ENCODE measurements at regions of chr12 and their contacts with region 1.

Region 1: GRCh38 chr12:7933255-7933729 is 2.7 kb downstream of the SLC2A3 start:
- DNase-seq: peak; percentile 33 to 87 (median 83)
- ATAC-seq: peak; percentile 85
- H3K4me3 ChIP-seq: peak overlapping the region; percentile 98
- H3K4me3 Mint-ChIP-seq: no peak overlapping the region
- H3K27ac ChIP-seq: peak overlapping the region; percentile 84
- H3K27ac Mint-ChIP-seq: no peak overlapping the region
- H3K4me1 ChIP-seq: peaks cover 18 to 33% of the 10 kb centered on the region in 2 donors
- H3K4me1 Mint-ChIP-seq: peaks cover 25 to 37% (median 34%) of the 10 kb centered on the region in 7 donors
- H3K27me3 ChIP-seq: no peaks in the 10 kb centered on the region
- H3K27me3 Mint-ChIP-seq: no peaks in the 10 kb centered on the region

Region 2: DNA sequence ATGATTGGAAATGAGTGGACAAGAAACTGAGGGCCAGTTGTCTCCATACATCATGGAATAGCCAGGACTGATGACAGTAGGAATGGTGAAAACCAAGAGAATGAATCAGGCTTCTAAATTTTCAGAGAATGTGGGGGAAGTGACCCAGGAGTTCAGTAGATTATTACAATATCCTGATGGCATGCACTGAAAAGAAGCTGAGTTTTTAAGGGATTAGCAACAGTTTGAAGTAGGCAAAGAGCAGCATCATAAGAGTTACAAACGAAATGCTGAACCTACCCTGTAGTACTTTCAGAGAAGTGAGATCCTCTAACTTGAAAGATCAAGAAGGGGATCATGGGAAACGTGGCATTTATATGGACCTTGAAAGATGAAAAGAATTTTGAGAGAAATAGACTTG is 73.7 kb before region 1 on chr12:
- CTCF ChIA-PET with region 1: interaction called, 14 read pairs
- POLR2A ChIA-PET with region 1: interaction called, 4 read pairs
- intact Hi-C with region 1: loop called (anchors 1 to 2 kb)
- DNase-seq: no peak
- ATAC-seq: no peak
- H3K4me3 ChIP-seq: no peak overlapping the region
- H3K4me3 Mint-ChIP-seq: no peak overlapping the region
- H3K27ac ChIP-seq: no peak overlapping the region
- H3K27ac Mint-ChIP-seq: peak overlapping the region in 2 of 9 donors; percentile 4 to 26
- H3K4me1 ChIP-seq: peaks cover 0 to 4% of the 10 kb centered on the region in 2 donors
- H3K4me1 Mint-ChIP-seq: peaks cover 0 to 18% (median 8%) of the 10 kb centered on the region in 7 donors
- H3K27me3 ChIP-seq: no peaks in the 10 kb centered on the region
- H3K27me3 Mint-ChIP-seq: peaks cover 0 to 18% (median 0%) of the 10 kb centered on the region in 5 donors

Region 3: GRCh38 chr12:7959701-7960121 is 26.4 kb after region 1 on chr12:
- CTCF ChIA-PET with region 1: interaction called, 96 read pairs
- POLR2A ChIA-PET with region 1: interaction called, 267 read pairs
- intact Hi-C with region 1: loop called (anchors 1 kb)
- DNase-seq: peak in 8 of 9 donors; percentile 34 to 49 (median 40)
- ATAC-seq: peak; percentile 33
- H3K4me3 ChIP-seq: peak overlapping the region; percentile 79
- H3K4me3 Mint-ChIP-seq: peak overlapping the region; percentile 80 to 97 (median 89)
- H3K27ac ChIP-seq: peak overlapping the region; percentile 87
- H3K27ac Mint-ChIP-seq: peak overlapping the region; percentile 87 to 99 (median 95)
- H3K4me1 ChIP-seq: peaks cover 26 to 29% of the 10 kb centered on the region in 2 donors
- H3K4me1 Mint-ChIP-seq: peaks cover 27 to 51% (median 46%) of the 10 kb centered on the region in 7 donors
- H3K27me3 ChIP-seq: no peaks in the 10 kb centered on the region
- H3K27me3 Mint-ChIP-seq: no peaks in the 10 kb centered on the region

Region 4: GRCh38 chr12:7989827-7990551 is 56.7 kb after region 1 on chr12:
- CTCF ChIA-PET with region 1: interaction called, 74 read pairs
- POLR2A ChIA-PET with region 1: interaction called, 61 read pairs
- intact Hi-C with region 1: loop called (anchors 1 kb)
- DNase-seq: peak; percentile 22 to 73 (median 27)
- ATAC-seq: peak; percentile 94
- H3K4me3 ChIP-seq: no peak overlapping the region
- H3K4me3 Mint-ChIP-seq: peak overlapping the region; percentile 61 to 85 (median 72)
- H3K27ac ChIP-seq: no peak overlapping the region
- H3K27ac Mint-ChIP-seq: peak overlapping the region; percentile 71 to 92 (median 87)
- H3K4me1 ChIP-seq: peaks cover 19 to 20% of the 10 kb centered on the region in 2 donors
- H3K4me1 Mint-ChIP-seq: peaks cover 18 to 53% (median 24%) of the 10 kb centered on the region in 7 donors
- H3K27me3 ChIP-seq: no peaks in the 10 kb centered on the region
- H3K27me3 Mint-ChIP-seq: no peaks in the 10 kb centered on the region

Region 5: GRCh38 chr12:8026291-8026900 is 93.1 kb after region 1 on chr12:
- CTCF ChIA-PET with region 1: interaction called, 10 read pairs
- POLR2A ChIA-PET with region 1: interaction called, 17 read pairs
- intact Hi-C with region 1: loop called (anchors 1 kb)
- DNase-seq: peak; percentile 74 to 99 (median 98)
- ATAC-seq: peak; percentile 96
- H3K4me3 ChIP-seq: peak overlapping the region; percentile 79
- H3K4me3 Mint-ChIP-seq: peak overlapping the region; percentile 89 to 100 (median 96)
- H3K27ac ChIP-seq: peak overlapping the region; percentile 99
- H3K27ac Mint-ChIP-seq: peak overlapping the region; percentile 96 to 100 (median 99)
- H3K4me1 ChIP-seq: peaks cover 5 to 8% of the 10 kb centered on the region in 2 donors
- H3K4me1 Mint-ChIP-seq: peaks cover 5 to 36% (median 13%) of the 10 kb centered on the region in 7 donors
- H3K27me3 ChIP-seq: no peaks in the 10 kb centered on the region
- H3K27me3 Mint-ChIP-seq: peaks cover 0 to 2% (median 0%) of the 10 kb centered on the region in 5 donors

Region 6: GRCh38 chr12:8045952-8046944 is 113.0 kb after region 1 on chr12:
- CTCF ChIA-PET with region 1: interaction called, 11 read pairs
- POLR2A ChIA-PET with region 1: no interaction called
- intact Hi-C with region 1: loop called in 1 of 2 experiments (anchors 1 kb)
- DNase-seq: peak; percentile 60 to 85 (median 76)
- ATAC-seq: peak; percentile 96
- H3K4me3 ChIP-seq: no peak overlapping the region
- H3K4me3 Mint-ChIP-seq: no peak overlapping the region
- H3K27ac ChIP-seq: no peak overlapping the region
- H3K27ac Mint-ChIP-seq: peak overlapping the region in 5 of 9 donors; percentile 57 to 80 (median 63)
- H3K4me1 ChIP-seq: no peaks in the 10 kb centered on the region
- H3K4me1 Mint-ChIP-seq: peaks cover 10 to 19% (median 12%) of the 10 kb centered on the region in 7 donors
- H3K27me3 ChIP-seq: no peaks in the 10 kb centered on the region
- H3K27me3 Mint-ChIP-seq: no peaks in the 10 kb centered on the region

Region 7: GRCh38 chr12:8088574-8088973 is 155.3 kb after region 1 on chr12:
- CTCF ChIA-PET with region 1: no interaction called
- POLR2A ChIA-PET with region 1: interaction called, 14 read pairs
- intact Hi-C with region 1: no loop called
- DNase-seq: peak in 7 of 9 donors; percentile 28 to 54 (median 43)
- ATAC-seq: peak; percentile 92
- H3K4me3 ChIP-seq: peak overlapping the region; percentile 7
- H3K4me3 Mint-ChIP-seq: peak overlapping the region; percentile 71 to 87 (median 82)
- H3K27ac ChIP-seq: peak overlapping the region; percentile 70
- H3K27ac Mint-ChIP-seq: peak overlapping the region; percentile 84 to 97 (median 93)
- H3K4me1 ChIP-seq: peaks cover 25 to 36% of the 10 kb centered on the region in 2 donors
- H3K4me1 Mint-ChIP-seq: peaks cover 35 to 68% (median 56%) of the 10 kb centered on the region in 7 donors
- H3K27me3 ChIP-seq: no peaks in the 10 kb centered on the region
- H3K27me3 Mint-ChIP-seq: no peaks in the 10 kb centered on the region

Region 8: DNA sequence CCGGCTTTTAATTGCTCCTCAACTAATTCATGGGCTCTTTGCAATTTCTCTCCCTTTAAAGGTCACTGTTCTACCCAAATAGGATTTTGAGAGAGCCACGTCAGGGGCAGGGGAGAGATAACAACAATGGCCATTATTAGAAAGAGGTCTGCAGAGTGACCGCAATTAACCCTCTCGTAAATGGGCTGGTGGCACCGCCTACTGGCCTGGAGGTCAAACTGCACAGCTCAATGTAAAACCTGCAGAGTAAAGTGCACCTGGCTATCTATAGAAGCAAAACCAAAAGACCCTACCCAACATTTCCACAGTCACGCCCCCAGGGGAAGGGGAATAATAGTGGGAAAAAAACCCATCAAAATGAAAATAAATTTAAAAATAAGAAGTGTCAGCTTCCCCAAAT is 629.0 kb after region 1 on chr12:
- CTCF ChIA-PET with region 1: no interaction called
- POLR2A ChIA-PET with region 1: no interaction called
- intact Hi-C with region 1: no loop called
- DNase-seq: no peak
- ATAC-seq: no peak
- H3K4me3 ChIP-seq: no peak overlapping the region
- H3K4me3 Mint-ChIP-seq: no peak overlapping the region
- H3K27ac ChIP-seq: no peak overlapping the region
- H3K27ac Mint-ChIP-seq: no peak overlapping the region
- H3K4me1 ChIP-seq: no peaks in the 10 kb centered on the region
- H3K4me1 Mint-ChIP-seq: no peaks in the 10 kb centered on the region
- H3K27me3 ChIP-seq: peaks cover 0 to 4% of the 10 kb centered on the region in 2 donors
- H3K27me3 Mint-ChIP-seq: peaks cover 4 to 17% (median 7%) of the 10 kb centered on the region in 5 donors

Measured in naive thymus-derived CD4-positive, alpha-beta T cell (primary cell).